Left colon (tissue), 2 donors: ENCODE measurements at regions of chr2 and their contacts with region 1.

Region 1: DNA sequence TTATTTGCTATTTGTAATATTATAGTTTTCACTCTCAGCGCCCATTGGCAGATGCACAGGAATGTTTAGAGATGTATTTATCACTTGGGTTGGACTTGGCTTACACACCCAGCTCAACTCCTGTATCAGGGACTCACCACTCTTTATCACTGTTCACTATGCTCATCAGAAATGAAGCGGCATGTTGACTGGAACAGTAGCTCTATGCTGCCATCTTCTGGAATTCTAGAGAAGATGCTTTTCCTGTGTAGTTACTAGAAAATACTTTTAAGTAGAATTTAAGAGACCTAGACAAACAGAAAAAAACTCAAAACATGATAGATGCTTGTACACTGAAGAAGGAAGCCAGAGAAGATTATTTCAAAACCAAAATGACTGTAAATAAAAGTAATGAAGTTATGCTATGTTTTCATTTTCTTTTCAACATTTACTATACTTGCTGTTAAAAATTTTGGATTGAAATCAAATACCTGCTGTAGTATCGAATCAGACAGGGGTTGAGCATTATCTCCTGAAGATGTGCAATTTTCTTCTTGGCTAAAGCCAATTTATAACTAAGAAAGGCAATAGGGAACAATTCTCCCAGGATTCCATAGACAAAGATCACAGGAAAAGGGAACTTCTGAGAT is 47.4 kb upstream of the NXPH2 start:
- DNase-seq: no peak
- ATAC-seq: peak; percentile 48

Region 2: GRCh38 chr2:138086611-138087010 is 740.9 kb before region 1 on chr2:
- intact Hi-C with region 1: loop called in 1 of 2 experiments (anchors 10 kb)
- DNase-seq: no peak
- ATAC-seq: no peak